Transverse colon (tissue), 4 donors: ENCODE measurements at regions of chr1 and their contacts with region 1.

Region 1: DNA sequence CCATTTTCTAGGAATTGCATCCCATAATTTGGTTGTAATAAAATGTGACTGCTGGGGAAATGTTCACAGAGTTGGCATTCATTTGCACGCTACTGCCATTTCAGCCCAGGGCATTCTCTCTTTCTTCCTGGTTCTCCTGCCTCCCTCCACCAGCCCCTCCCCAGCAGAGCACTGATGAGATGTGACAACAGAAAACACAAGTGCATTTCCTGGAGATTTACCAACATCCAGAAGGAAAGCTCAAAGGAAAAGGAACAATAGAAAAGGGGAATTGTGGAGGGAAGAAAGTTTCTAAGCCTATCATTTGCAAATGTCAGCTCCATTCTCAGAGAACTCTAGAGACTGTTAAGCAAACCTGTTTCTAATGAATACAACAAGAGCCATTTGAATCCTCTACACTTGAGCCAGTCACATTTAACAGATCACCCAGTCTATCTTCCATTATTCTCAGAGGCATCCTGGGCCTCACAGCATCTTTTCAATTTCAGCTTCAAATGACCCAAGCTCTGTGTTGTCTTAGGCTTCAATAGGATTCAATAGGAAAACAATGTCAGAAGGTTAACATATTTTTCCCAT is 395.6 kb upstream of the PBX1 start:
- DNase-seq: no peak
- H3K4me3 ChIP-seq: no peak overlapping the region
- H3K27ac ChIP-seq: no peak overlapping the region
- H3K4me1 ChIP-seq: no peaks in the 10 kb centered on the region
- H3K27me3 ChIP-seq: no peaks in the 10 kb centered on the region
- CTCF ChIP-seq: no peak
- EP300 ChIP-seq: no peak
- POLR2A ChIP-seq: no peak

Region 2: GRCh38 chr1:164310166-164310565 is 146.8 kb after region 1 on chr1:
- in situ Hi-C with region 1: no loop called
- intact Hi-C with region 1: no loop called
- DNase-seq: no peak
- H3K4me3 ChIP-seq: no peak overlapping the region
- H3K27ac ChIP-seq: no peak overlapping the region
- H3K4me1 ChIP-seq: no peaks in the 10 kb centered on the region
- H3K27me3 ChIP-seq: no peaks in the 10 kb centered on the region
- CTCF ChIP-seq: no peak
- EP300 ChIP-seq: no peak
- POLR2A ChIP-seq: no peak

Region 3: GRCh38 chr1:164794310-164794709 is 630.9 kb after region 1 on chr1:
- in situ Hi-C with region 1: loop called in 2 of 4 experiments (anchors 10 to 25 kb)
- intact Hi-C with region 1: no loop called
- DNase-seq: no peak
- H3K4me3 ChIP-seq: no peak overlapping the region
- H3K27ac ChIP-seq: peak overlapping the region; percentile 22 to 78 (median 60)
- H3K4me1 ChIP-seq: peaks cover 6 to 36% (median 15%) of the 10 kb centered on the region in 4 donors
- H3K27me3 ChIP-seq: no peaks in the 10 kb centered on the region
- CTCF ChIP-seq: no peak
- EP300 ChIP-seq: no peak
- POLR2A ChIP-seq: no peak